AG04450 (cell line): ENCODE measurements at regions of chr6 and their contacts with region 1.

Region 1: DNA sequence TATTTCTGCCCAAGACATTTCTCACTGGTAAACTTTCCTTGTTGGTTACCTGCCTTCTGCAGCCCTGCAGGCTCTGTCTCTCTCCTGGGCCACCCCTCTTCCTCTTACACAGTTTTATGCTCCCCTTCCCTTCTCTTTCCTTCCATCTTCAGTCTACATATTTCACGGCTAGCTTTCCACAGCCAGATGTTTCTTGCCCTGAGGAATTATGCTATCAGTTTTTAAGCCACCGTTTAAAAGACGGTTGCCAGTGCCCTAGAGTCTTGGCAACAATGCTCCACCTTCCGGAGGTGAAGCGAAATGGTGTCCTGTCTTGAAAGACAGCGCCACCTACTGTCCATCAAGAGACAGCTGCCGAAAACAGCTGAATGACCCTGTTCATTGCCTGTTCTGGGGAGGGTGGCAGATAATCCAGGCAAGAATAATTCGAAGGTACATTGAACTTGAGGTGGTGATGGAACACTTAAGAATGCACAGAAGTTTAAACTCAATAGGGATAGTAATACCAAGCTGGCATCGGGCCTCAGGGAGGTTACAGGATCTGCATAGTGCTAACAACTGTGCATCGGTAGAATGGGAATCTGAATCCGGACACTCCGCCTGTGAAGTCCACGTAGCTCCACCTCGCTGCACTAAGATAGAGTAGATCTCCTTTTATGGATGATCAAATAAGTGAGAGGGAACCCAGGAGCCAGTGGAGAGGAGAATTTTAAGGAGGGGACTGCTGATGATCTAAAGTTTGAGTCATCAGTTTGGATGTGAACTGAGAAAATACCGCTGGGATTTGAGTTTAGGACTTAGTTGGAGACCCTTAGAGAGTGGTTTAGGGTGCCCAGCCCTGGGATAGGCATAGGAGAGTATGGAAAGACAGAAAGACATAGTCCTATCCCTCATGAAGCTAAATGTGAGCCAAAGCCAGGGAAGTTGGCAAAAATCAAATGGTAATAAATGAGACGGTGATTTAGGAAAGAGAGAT is 4.8 kb upstream of the TRIM40 start:
- DNase-seq: peak; percentile 64
- H3K4me3 ChIP-seq: no peak overlapping the region
- H3K27ac ChIP-seq: no peak overlapping the region
- H3K27me3 ChIP-seq: peaks cover 45% of the 10 kb centered on the region
- CTCF ChIP-seq: peak; percentile 99

Region 2: DNA sequence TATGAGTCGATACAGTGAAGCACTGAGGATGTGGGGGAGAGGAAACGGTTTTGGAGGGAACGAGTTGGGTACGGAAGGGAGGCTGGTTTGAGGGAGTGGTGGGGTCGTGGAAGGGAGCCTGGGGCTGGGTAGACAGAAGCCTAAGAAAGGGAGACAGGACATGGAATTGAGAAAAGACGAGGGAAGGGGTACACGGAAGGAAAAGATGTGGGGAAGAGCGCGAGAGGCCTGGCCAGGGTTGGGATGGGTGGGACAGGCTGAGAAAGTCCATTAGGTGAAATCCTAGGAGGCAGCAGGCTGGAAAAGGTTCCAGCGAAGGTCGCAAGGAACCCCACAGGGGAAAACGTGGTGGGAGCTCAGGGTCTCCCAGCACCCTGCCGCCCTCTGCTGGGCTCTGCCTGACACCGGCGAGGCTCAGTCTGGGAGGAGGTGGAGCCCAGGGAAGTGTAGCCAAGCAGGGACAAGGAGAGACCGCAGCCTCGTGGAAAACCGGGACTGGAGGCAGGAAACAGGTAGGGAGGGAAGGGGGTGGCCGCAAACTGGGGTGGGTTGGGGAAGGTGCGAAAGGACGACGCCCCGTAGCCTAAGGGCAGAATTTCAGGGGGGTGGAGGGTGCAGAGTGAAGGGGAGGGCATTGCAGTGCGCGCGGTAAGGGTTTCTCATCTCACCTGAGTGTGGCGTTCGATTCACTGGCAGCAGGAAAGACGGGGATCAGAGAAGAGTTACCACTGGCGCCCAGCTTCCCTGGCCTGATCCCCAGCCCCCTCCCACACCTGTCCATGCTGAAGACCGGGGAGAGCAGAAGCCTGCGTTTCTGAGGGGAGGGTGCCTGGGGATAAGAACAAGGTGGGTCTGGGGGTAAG is 502.5 kb before region 1 on chr6:
- CTCF ChIA-PET with region 1: no interaction called
- POLR2A ChIA-PET with region 1: no interaction called
- DNase-seq: peak; percentile 26
- H3K4me3 ChIP-seq: peak overlapping the region; percentile 76
- H3K27ac ChIP-seq: peak overlapping the region; percentile 83
- H3K27me3 ChIP-seq: no peaks in the 10 kb centered on the region
- CTCF ChIP-seq: peak; percentile 75

Region 3: DNA sequence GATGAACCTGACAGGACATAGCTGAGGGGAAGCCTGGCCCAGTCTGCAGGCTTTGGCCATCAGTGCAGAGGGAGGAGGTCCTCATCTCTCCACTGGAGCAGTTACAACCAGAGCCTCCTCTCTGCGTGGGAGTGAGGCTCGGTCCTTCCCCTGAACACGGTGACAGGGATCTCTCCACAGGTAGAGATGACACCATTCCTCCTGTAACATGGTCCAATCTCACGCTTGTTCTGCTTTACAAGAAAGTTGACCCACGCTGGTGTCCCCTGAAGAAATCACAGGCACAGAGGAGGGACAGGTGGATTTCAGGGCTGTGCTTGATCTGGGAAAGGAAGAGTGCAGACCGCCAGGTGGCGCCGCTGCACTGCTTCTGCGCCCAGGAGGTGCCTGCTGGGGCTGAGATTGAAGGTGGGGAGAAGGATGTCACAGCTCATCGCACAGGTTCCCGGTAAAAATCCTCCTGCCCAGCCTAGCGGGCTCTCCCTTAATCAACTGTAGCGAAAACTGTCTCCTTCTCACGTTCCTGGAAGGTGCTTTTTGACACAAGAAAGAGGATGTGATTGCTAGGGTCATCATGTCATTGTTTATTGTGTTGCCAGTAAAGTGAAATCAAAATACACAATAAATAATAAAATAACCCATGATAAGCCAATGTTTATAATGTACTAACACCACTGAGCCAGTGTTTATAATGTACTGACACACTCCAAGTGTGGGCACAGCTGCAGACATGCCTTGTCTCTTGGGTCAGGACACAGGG is 283.1 kb before region 1 on chr6:
- CTCF ChIA-PET with region 1: interaction called, 25 read pairs
- POLR2A ChIA-PET with region 1: no interaction called
- DNase-seq: peak; percentile 6
- H3K4me3 ChIP-seq: no peak overlapping the region
- H3K27ac ChIP-seq: no peak overlapping the region
- H3K27me3 ChIP-seq: peaks cover 30% of the 10 kb centered on the region
- CTCF ChIP-seq: peak; percentile 96

Region 4: GRCh38 chr6:30102970-30103874 is 28.0 kb before region 1 on chr6:
- CTCF ChIA-PET with region 1: interaction called, 236 read pairs
- POLR2A ChIA-PET with region 1: no interaction called
- DNase-seq: peak; percentile 64
- H3K4me3 ChIP-seq: peak overlapping the region; percentile 58
- H3K27ac ChIP-seq: no peak overlapping the region
- H3K27me3 ChIP-seq: peaks cover 50% of the 10 kb centered on the region
- CTCF ChIP-seq: peak; percentile 92

Region 5: DNA sequence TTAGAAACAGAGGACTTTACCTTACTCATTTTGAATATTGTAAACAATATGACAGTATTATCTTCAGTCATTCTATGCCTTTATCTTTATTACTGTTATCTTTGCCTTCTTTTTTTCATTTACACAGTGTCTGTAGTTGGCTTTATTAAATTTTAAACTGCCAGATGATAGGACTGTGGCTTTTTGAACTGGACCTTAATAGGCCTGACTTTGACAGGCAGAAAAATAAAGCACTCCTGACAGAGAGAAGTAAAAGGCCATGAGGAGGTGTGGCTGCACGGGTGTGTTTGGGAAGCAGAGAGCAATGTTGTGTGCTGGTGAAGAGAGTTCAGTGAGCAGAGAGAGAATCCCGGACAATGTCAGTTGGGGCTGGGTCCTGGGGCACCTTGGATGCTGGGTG is 12.6 kb after region 1 on chr6:
- CTCF ChIA-PET with region 1: interaction called, 40 read pairs
- POLR2A ChIA-PET with region 1: no interaction called
- DNase-seq: no peak
- H3K4me3 ChIP-seq: no peak overlapping the region
- H3K27ac ChIP-seq: no peak overlapping the region
- H3K27me3 ChIP-seq: peaks cover 20% of the 10 kb centered on the region
- CTCF ChIP-seq: no peak

Region 6: DNA sequence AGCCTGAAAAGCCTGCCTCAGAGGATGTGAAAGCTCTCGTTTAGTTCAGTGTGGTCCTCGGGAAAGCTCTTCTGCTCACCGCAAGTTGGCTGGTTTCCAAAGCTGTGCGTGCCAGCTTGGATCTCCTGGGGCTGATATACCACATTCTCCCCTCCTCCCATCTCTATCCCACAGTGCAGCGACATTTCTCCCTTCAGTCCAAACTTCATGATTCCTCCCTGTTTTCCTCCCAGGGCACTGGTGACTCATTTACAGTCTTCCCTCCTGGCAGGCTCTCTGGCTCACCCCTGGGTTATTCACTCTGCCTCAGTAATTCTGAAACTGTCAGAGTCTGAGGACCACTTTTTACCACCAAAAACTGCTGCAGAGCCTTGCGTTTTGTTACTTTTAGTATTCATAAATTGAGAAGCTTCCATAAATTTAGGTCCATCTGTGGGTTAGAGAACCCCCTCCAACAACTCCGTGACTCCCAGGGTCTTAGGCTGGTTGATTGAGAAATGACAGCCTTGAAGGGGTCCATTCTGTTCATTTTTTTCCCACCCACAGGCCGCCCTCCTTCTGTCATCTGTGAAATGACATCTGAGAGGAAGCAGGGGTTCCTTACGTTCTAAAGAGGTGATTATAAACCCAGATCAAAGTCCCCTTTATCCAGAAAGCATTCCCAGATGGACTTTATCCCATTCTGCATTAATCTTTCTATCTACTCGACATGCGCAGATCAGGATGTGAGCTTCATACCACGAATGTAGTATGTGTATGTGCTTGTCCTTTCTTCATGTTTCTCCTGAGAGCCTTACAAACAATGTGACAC is 23.7 kb after region 1 on chr6:
- CTCF ChIA-PET with region 1: interaction called, 23 read pairs
- POLR2A ChIA-PET with region 1: no interaction called
- DNase-seq: no peak
- H3K4me3 ChIP-seq: no peak overlapping the region
- H3K27ac ChIP-seq: no peak overlapping the region
- H3K27me3 ChIP-seq: peaks cover 12% of the 10 kb centered on the region
- CTCF ChIP-seq: no peak